ENCODE measurements at regions of chr6 and their contacts with region 1.

Region 1: DNA sequence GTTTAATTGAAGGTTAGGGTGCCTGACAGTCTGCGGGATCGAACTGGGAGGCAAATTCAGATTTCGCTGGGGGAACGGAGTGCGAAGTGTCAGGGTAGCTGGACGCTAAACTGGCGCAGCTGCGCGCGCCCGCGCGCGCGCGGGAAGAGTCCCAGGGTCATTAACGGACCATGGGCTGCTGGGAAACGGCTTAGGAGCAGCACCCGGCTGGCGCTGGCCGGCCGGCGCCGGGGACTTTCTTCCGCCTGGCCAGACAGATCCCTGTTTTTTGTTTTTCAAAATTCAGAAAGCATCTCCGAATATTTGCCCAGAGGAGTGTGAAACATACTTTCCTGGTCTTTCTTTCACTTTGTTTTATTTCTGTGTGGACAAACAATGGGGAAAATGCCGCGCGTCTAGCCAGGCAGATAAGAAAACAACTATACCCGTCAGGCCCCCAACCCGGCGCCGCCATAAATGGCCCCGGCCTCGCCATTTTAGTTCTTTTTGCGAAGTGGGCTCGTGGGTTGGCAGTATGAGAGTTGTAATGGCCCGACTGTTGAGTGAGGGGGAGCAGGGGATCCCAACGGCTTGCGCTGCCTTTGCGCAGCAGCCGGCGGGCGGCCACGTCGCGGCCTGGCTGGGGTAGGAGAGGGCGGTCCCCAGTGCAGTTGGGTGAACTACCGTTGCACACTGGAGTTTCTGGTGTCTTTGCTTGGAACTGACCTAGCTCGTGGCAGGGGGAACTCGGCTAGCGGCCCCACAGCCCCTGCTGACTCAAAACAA is 7.1 kb downstream of the HSPA1B start:
- DNase-seq: peak; percentile 92
- ATAC-seq: peak; percentile 90 to 93

Region 2: GRCh38 chr6:31246050-31246521 is 588.5 kb before region 1 on chr6:
- intact Hi-C with region 1: no loop called
- DNase-seq: no peak
- ATAC-seq: peak in 1 of 2 donors; percentile 23

Region 3: GRCh38 chr6:31680840-31681671 is 153.6 kb before region 1 on chr6 and contains the start of gene LY6G5C:
- intact Hi-C with region 1: loop called (anchors 5 to 10 kb)
- DNase-seq: peak; percentile 86
- ATAC-seq: peak; percentile 84 to 92
- total RNA-seq, gene LY6G5C: 2.2 to 2.5 TPM

Region 4: GRCh38 chr6:31739639-31740396 is 94.8 kb before region 1 on chr6 and contains the start of gene MSH5:
- intact Hi-C with region 1: loop called in 1 of 2 experiments (anchors 10 kb)
- DNase-seq: peak; percentile 98
- ATAC-seq: peak; percentile 93 to 96
- total RNA-seq, gene MSH5: 2.6 to 3.0 TPM

Region 5: GRCh38 chr6:31776989-31777666 is 57.5 kb before region 1 on chr6 and contains the start of gene VWA7:
- intact Hi-C with region 1: loop called in 1 of 2 experiments (anchors 5 kb)
- DNase-seq: peak; percentile 83
- ATAC-seq: peak; percentile 77 to 91
- total RNA-seq, gene VWA7: 4.8 to 6.2 TPM

Region 6: DNA sequence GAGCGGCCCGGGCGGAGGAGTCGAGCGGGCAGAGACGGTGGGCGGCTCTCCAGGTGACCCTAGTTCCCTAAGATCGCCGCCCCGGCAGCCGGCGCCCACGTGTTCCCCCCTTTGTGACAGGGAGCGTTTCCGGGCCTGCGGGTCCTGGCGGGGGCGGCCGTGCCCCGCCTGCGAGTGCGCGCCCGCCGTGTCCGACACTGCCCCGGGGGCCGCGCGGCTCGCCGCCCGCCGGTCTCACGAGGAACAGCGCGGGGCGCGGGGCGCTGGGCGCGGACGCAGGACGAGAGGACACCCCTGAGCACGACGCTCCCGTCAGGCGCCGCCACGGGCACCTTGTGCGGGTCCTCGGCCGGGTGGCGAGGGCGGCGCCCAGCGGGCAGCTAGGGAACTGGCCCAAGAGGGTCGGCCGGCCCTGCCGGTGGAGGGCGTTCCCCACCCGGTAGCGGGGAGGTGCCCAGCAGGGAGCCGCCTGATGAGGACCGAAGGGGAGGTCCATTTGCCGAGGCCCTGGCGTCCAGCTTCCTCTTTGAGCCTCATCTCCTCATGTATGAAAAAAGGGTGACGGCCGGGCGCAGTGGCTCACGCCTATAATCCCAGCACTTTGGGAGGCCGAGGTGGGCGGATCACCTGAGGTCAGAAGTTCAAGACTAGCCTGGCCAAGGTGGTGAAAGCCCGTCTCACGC is 38.9 kb before region 1 on chr6 and contains the start of gene VARS1:
- intact Hi-C with region 1: no loop called
- DNase-seq: peak; percentile 94
- ATAC-seq: peak; percentile 95 to 96
- total RNA-seq, gene VARS1: 24.8 to 39.3 TPM

Region 7: GRCh38 chr6:31958741-31959739 is 124.4 kb after region 1 on chr6 and contains the starts of genes NELFE and SKIC2:
- intact Hi-C with region 1: no loop called
- DNase-seq: peak; percentile 98
- ATAC-seq: peak; percentile 98 to 100
- total RNA-seq, gene NELFE: 39.8 to 53.7 TPM
- total RNA-seq, gene SKIC2: 36.8 to 45.1 TPM